ENCODE measurements at regions of chr20 and their contacts with region 1.

Region 1: GRCh38 chr20:36481381-36482043 is 59.8 kb upstream of the MYL9 start:
- DNase-seq: no peak
- ATAC-seq: peak; percentile 47
- H3K4me3 Mint-ChIP-seq: no peak overlapping the region
- H3K27ac Mint-ChIP-seq: peak overlapping the region; percentile 26; the same call in 1 of the 2 replicates
- H3K4me1 Mint-ChIP-seq: no peaks in the 10 kb centered on the region
- H3K27me3 Mint-ChIP-seq: no peaks in the 10 kb centered on the region
- CTCF ChIP-seq: no peak

Region 2: GRCh38 chr20:36493013-36493800 is 11.7 kb after region 1 on chr20:
- CTCF ChIA-PET with region 1: interaction called, 10 read pairs
- POLR2A ChIA-PET with region 1: no interaction called
- DNase-seq: peak; percentile 56
- ATAC-seq: peak; percentile 72
- H3K4me3 Mint-ChIP-seq: no peak overlapping the region
- H3K27ac Mint-ChIP-seq: peak overlapping the region; percentile 75; the same call in 1 of the 2 replicates
- H3K4me1 Mint-ChIP-seq: peaks cover 9% of the 10 kb centered on the region
- H3K27me3 Mint-ChIP-seq: no peaks in the 10 kb centered on the region; the same call in 1 of the 2 replicates
- CTCF ChIP-seq: no peak; the same call in 1 of the 2 replicates

Measured in WTC11 (cell line).